Activated CD8-positive, alpha-beta T cell treated with anti-CD3 and anti-CD28 coated beads for 36 hours (primary cell): ENCODE measurements at regions of chr1 and their contacts with region 1.

Region 1: DNA sequence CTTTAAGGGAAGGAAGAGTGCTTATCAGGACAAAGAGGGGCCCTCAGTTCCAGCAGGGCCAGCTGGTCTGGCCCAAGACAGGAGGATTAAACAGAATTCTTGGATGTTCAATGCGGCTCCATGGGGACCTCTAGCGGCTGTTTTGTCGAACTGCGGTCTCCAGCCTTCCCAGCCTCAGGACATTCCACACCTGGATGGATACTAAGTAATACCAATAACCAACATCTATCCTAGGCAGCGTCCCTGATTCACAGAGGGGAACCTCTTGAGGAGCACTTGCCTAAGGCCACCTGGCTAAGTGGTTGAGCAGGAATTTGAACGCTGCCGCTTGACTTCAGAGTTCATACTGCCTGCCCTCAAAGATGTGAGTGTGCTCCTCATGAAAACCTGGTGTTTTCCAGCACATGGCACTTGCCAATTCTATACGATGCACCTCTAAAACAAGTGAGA is 15.5 kb upstream of the CD247 start:
- DNase-seq: peak; percentile 74
- ATAC-seq: peak; percentile 94
- H3K4me3 Mint-ChIP-seq: no peak overlapping the region
- H3K27ac Mint-ChIP-seq: no peak overlapping the region
- H3K4me1 Mint-ChIP-seq: peaks cover 4% of the 10 kb centered on the region
- H3K27me3 Mint-ChIP-seq: no peaks in the 10 kb centered on the region
- CTCF ChIP-seq: peak; percentile 99

Region 2: GRCh38 chr1:167263819-167264464 is 269.9 kb before region 1 on chr1:
- CTCF ChIA-PET with region 1: interaction called, 29 read pairs
- POLR2A ChIA-PET with region 1: no interaction called
- intact Hi-C with region 1: loop called (anchors 5 kb)
- DNase-seq: no peak
- ATAC-seq: peak; percentile 67
- H3K4me3 Mint-ChIP-seq: no peak overlapping the region
- H3K27ac Mint-ChIP-seq: no peak overlapping the region
- H3K4me1 Mint-ChIP-seq: peaks cover 22% of the 10 kb centered on the region
- H3K27me3 Mint-ChIP-seq: no peaks in the 10 kb centered on the region
- CTCF ChIP-seq: no peak

Region 3: GRCh38 chr1:167409183-167409582 is 124.7 kb before region 1 on chr1:
- CTCF ChIA-PET with region 1: interaction called, 82 read pairs
- POLR2A ChIA-PET with region 1: no interaction called
- intact Hi-C with region 1: no loop called
- DNase-seq: no peak
- ATAC-seq: no peak
- H3K4me3 Mint-ChIP-seq: no peak overlapping the region
- H3K27ac Mint-ChIP-seq: no peak overlapping the region
- H3K4me1 Mint-ChIP-seq: peaks cover 10% of the 10 kb centered on the region
- H3K27me3 Mint-ChIP-seq: no peaks in the 10 kb centered on the region
- CTCF ChIP-seq: peak; percentile 38

Region 4: DNA sequence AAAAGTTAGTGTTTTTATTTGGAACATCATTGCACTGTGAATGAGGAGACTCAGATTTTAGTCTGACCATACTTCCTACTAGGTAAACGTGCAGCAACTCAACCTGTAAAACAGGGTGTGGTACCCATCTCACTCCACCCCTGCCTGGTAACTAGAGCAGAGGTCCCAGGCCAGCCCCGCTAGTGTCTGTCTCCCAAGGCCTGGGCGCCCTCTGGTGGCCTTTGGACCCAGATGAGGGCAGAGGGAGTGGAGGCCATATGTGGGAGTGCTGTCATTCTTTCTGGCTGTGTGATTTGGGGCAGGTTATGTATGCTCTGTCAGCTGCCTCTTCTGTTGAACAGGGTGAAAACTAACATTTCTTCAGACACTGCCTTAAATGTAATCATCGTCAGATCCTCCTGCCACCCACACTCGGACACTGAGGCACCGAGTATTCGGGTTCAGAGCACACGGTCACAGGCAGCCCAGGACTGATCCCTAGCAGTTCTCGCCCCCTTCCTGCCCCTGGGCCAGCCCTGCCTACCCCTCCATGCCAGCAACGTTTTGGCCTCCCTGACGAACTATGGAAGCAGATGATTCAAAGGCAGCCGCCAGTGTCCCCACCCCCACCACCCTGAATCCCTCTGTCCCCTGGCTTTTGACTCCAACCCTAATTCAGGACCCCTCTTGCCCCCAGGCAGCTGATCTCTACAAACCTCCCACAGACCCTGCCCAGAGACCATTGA is 91.6 kb before region 1 on chr1:
- CTCF ChIA-PET with region 1: interaction called, 25 read pairs
- POLR2A ChIA-PET with region 1: interaction called, 3 read pairs
- intact Hi-C with region 1: no loop called
- DNase-seq: peak; percentile 93
- ATAC-seq: peak; percentile 73
- H3K4me3 Mint-ChIP-seq: no peak overlapping the region
- H3K27ac Mint-ChIP-seq: peak overlapping the region; percentile 68
- H3K4me1 Mint-ChIP-seq: peaks cover 88% of the 10 kb centered on the region
- H3K27me3 Mint-ChIP-seq: no peaks in the 10 kb centered on the region
- CTCF ChIP-seq: peak; percentile 88

Region 5: GRCh38 chr1:167479331-167479979 is 54.4 kb before region 1 on chr1:
- CTCF ChIA-PET with region 1: interaction called, 12 read pairs
- POLR2A ChIA-PET with region 1: no interaction called
- intact Hi-C with region 1: no loop called
- DNase-seq: peak; percentile 65
- ATAC-seq: peak; percentile 28
- H3K4me3 Mint-ChIP-seq: peak overlapping the region; percentile 33
- H3K27ac Mint-ChIP-seq: peak overlapping the region; percentile 83
- H3K4me1 Mint-ChIP-seq: peaks cover 93% of the 10 kb centered on the region
- H3K27me3 Mint-ChIP-seq: no peaks in the 10 kb centered on the region
- CTCF ChIP-seq: no peak

Region 6: DNA sequence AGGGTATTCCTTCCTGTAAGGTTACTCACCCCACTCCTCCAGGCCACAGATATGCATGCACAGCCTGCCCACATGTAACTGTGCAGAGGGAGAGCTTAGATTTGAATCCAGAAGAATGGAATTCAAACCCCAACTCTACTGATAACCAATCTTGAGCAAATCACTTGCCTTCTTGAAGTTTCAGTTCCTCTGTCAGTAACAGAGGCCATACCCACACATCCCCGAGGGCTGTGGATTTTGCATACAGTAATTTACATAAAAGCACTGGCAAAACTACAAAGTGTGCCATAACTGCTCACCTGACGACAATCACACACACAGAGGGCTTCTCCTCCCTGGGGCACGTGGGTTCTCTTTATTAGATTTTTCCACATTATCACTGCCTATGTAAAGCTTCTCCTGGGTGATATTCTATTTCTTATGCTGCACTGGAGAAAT is 34.2 kb before region 1 on chr1:
- CTCF ChIA-PET with region 1: interaction called, 21 read pairs
- POLR2A ChIA-PET with region 1: interaction called, 4 read pairs
- intact Hi-C with region 1: no loop called
- DNase-seq: peak; percentile 70
- ATAC-seq: peak; percentile 40
- H3K4me3 Mint-ChIP-seq: peak overlapping the region; percentile 29
- H3K27ac Mint-ChIP-seq: peak overlapping the region; percentile 97
- H3K4me1 Mint-ChIP-seq: peaks cover 98% of the 10 kb centered on the region
- H3K27me3 Mint-ChIP-seq: no peaks in the 10 kb centered on the region
- CTCF ChIP-seq: no peak

Region 7: DNA sequence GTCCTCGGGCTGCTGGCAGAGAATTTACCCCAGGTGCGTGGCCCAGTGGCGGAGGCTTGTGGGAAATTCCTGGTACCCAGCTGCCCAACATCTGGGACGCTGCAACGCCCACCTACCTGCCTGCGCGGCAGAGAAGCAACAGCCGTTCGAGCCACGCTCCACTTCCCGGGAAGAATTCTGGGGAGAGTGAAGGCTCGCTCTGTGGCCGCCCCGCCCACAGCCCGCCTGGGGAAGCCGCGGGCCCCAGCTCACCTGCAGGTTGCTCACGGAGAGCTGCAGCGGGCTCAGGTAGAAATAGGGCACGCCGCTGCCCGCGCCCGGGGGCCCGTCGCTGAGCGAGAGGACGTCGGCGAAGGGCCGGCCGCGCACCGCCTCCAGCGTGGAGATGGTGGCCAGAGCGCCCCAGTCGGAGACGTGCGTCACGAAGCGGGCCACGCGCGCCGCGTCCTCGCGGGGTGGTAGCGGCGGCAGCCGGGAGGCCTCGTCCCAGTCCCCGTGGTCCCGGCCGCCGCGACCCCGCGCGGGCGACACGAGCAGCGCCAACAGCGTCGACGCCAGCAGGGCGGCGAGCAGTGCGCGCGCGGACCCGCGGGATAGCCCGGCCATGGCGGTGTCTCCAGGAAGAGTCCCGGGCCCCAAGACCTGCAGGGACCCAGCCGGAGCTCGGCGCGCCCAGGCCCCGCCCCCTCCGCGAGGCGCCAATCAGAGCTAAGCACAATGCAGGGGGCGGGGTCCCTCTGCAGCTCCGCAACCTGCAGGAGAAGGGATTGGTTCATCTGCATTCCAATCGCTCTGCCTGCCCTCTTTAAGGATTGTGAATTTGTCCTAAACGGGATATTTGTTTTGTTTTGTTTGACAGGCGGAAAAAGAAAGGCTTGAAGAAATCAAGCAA is 19.5 kb after region 1 on chr1 and contains the start of gene CREG1:
- CTCF ChIA-PET with region 1: interaction called, 30 read pairs
- POLR2A ChIA-PET with region 1: no interaction called
- intact Hi-C with region 1: no loop called
- DNase-seq: peak; percentile 92
- ATAC-seq: peak; percentile 100
- H3K4me3 Mint-ChIP-seq: peak within 1 kb of the TSS; percentile 86
- H3K27ac Mint-ChIP-seq: peak within 1 kb of the TSS; percentile 23
- H3K4me1 Mint-ChIP-seq: peaks cover 32% of the 10 kb centered on the region
- H3K27me3 Mint-ChIP-seq: no peaks in the 10 kb centered on the region
- CTCF ChIP-seq: no peak
- total RNA-seq, gene CREG1: 9.7 to 10.0 TPM

Region 8: GRCh38 chr1:167784876-167785550 is 251.1 kb after region 1 on chr1:
- CTCF ChIA-PET with region 1: no interaction called
- POLR2A ChIA-PET with region 1: no interaction called
- intact Hi-C with region 1: no loop called
- DNase-seq: peak; percentile 16
- ATAC-seq: peak; percentile 61
- H3K4me3 Mint-ChIP-seq: no peak overlapping the region
- H3K27ac Mint-ChIP-seq: no peak overlapping the region
- H3K4me1 Mint-ChIP-seq: peaks cover 8% of the 10 kb centered on the region
- H3K27me3 Mint-ChIP-seq: no peaks in the 10 kb centered on the region
- CTCF ChIP-seq: no peak